Stomach (tissue), 19 donors: ENCODE measurements at regions of chr2 and their contacts with region 1.

Region 1: DNA sequence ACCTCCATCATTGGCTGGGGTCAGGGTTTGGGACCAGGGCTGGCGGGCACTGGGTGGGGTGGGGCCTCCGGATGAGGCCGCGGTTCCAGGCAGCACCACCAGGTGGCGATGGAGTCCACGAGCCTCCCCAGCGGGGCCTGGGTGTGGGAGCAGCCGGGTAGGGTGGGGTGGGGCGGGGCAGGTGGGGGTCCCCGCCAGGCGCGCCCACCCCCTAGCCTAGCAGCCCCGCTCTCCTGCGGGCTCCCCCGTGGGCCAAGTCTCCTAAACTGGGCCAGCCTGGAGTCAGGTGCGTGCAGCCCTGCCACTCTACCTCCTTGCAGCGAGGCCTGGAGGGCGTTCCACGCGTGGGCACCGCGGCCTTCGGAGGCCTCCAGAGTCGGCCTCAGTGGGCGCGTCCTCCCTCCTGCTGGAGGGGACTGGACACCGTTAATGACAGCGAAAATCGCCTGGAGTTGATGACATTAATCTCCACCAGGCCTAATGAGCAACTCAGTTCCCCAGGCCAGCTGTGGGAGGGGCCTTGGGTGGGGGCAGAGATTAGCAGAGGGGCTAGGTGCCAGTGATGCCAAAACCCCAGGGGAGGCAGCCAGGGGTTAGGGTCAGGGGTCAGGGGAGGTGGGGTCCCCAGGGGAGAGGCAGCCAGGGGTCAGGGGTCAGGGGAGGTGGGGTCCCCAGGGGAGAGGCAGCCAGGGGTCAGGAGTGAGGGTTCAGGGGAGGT is 187.6 kb downstream of the TWIST2 start:
- DNase-seq: peak; percentile 56 to 68
- H3K4me3 ChIP-seq: no peak overlapping the region
- H3K27ac ChIP-seq: no peak overlapping the region
- H3K4me1 ChIP-seq: peaks cover 0 to 6% (median 4%) of the 10 kb centered on the region in 4 donors
- H3K27me3 ChIP-seq: peaks cover 0 to 19% (median 9%) of the 10 kb centered on the region in 3 donors
- CTCF ChIP-seq: peak in 5 of 7 experiments; percentile 40 to 99 (median 96)
- EP300 ChIP-seq: no peak
- POLR2A ChIP-seq: no peak

Region 2: DNA sequence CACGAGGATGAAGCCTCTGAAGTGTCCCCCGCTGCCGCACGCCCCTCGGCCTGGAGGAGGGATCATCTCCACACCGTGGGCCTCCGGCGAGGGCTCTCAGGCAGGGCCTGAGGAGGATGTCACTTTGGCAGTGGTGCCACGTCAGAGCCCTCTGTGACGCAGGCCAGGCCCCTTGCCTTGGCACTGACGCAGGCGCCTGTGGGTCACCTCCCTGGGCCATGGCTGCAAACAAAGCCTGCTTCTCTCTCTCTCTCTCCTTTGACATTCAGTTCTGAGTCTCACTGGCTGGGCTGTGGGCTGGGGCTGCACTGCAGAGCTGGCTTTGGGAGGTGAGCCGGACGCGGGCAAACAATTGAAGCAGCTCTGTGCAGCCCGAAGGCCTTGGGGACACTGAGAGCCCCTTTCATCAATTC is 86.1 kb after region 1 on chr2:
- intact Hi-C with region 1: no loop called
- DNase-seq: peak in 1 of 2 donors; percentile 71
- H3K4me3 ChIP-seq: no peak overlapping the region
- H3K27ac ChIP-seq: peak overlapping the region in 3 of 5 donors; percentile 37 to 77 (median 66)
- H3K4me1 ChIP-seq: peaks cover 0 to 26% (median 5%) of the 10 kb centered on the region in 4 donors
- H3K27me3 ChIP-seq: no peaks in the 10 kb centered on the region
- CTCF ChIP-seq: no peak
- EP300 ChIP-seq: peak; percentile 75
- POLR2A ChIP-seq: no peak

Region 3: DNA sequence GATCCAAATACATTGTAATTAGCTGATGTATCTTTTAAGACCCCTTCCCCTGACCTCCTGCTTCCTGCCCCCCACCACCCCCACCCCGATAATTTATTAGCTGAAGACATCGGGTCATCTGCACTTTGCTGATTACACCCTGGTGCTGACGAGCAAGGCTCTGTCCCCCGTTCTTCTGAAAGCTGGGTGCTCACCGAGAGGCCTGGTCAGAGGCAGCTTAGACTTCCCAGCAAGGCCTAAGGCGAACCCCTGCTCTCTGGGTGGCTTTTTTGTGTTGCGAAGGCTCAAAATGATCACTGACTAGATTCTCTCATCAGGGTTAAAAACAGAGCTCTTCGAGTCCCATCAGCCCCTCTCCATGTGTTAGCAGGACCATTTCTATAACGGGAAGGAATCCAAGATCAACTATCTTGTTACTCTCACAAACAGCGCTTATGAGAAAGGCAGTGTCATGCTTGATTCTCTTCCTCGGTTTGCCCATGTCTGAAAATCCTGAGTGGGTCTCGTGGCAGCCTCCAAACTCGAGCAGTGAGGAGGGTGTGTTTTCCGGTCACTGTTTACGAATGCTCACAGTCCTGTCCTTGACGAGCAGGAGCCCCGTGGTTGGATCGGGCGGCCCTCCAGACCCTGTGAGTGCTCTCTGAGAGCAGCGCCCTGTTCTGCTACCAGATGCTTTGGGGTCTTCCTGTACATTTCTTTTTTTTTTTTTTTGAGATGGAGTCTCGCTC is 163.7 kb after region 1 on chr2:
- intact Hi-C with region 1: no loop called
- DNase-seq: peak in 1 of 2 donors; percentile 54
- H3K4me3 ChIP-seq: no peak overlapping the region
- H3K27ac ChIP-seq: peak overlapping the region in 4 of 5 donors; percentile 39 to 61 (median 54)
- H3K4me1 ChIP-seq: peaks cover 0 to 31% (median 14%) of the 10 kb centered on the region in 4 donors
- H3K27me3 ChIP-seq: no peaks in the 10 kb centered on the region
- CTCF ChIP-seq: no peak
- EP300 ChIP-seq: no peak
- POLR2A ChIP-seq: no peak

Region 4: GRCh38 chr2:239882331-239882732 is 846.8 kb after region 1 on chr2:
- intact Hi-C with region 1: loop called (anchors 10 kb)
- DNase-seq: peak; percentile 57 to 80
- H3K4me3 ChIP-seq: no peak overlapping the region
- H3K27ac ChIP-seq: peak overlapping the region in 1 of 5 donors; percentile 36
- H3K4me1 ChIP-seq: peaks cover 0 to 10% (median 0%) of the 10 kb centered on the region in 4 donors
- H3K27me3 ChIP-seq: peaks cover 0 to 10% (median 6%) of the 10 kb centered on the region in 3 donors
- CTCF ChIP-seq: peak in 5 of 7 experiments; percentile 46 to 62 (median 56)
- EP300 ChIP-seq: no peak
- POLR2A ChIP-seq: no peak

Region 5: GRCh38 chr2:239979243-239980023 is 943.9 kb after region 1 on chr2:
- intact Hi-C with region 1: loop called (anchors 10 kb)
- DNase-seq: peak in 1 of 2 donors; percentile 82
- H3K4me3 ChIP-seq: no peak overlapping the region
- H3K27ac ChIP-seq: no peak overlapping the region
- H3K4me1 ChIP-seq: no peaks in the 10 kb centered on the region
- H3K27me3 ChIP-seq: no peaks in the 10 kb centered on the region
- CTCF ChIP-seq: no peak
- EP300 ChIP-seq: no peak
- POLR2A ChIP-seq: no peak

Region 6: GRCh38 chr2:240143801-240144648 is 1108.5 kb after region 1 on chr2:
- intact Hi-C with region 1: loop called (anchors 10 kb)
- DNase-seq: peak; percentile 73 to 87
- H3K4me3 ChIP-seq: no peak overlapping the region
- H3K27ac ChIP-seq: no peak overlapping the region
- H3K4me1 ChIP-seq: peaks cover 0 to 7% (median 6%) of the 10 kb centered on the region in 4 donors
- H3K27me3 ChIP-seq: peaks cover 0 to 58% (median 34%) of the 10 kb centered on the region in 3 donors
- CTCF ChIP-seq: peak in 5 of 7 experiments; percentile 65 to 96 (median 93)
- EP300 ChIP-seq: no peak
- POLR2A ChIP-seq: no peak